Dorsolateral prefrontal cortex (tissue), 120 donors: ENCODE measurements at regions of chr17 and their contacts with region 1.

Region 1: DNA sequence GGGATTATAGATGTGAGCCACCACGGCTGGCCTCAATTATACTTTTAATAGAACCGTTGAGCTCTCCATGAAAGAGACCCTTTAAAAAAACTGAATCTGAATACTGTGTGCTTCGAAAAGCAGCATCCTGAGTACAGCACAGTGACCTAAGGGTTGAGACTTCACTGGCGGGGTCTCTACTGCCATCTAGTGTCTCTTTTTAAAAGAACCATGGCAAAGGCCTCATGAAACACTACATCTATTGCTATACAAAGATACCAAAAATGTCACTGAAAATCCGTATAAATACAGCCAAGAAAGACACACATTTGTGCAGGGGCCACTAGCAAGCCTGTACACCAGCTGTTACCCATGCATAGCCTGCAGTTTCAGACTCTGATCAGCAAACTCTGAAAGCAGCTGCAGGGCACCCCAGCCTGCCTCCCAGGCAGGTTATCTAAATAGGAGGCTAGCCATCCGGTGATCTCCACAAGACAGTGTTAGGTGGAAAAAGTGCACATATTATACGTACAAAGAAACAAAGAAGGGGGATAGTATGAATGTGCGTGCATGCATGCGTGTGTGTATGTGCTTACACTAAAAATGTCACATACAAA is 35.3 kb downstream of the NPLOC4 start:
- DNase-seq: peak in 2 of 10 donors; percentile 41 to 54
- H3K4me3 ChIP-seq: no peak overlapping the region
- H3K27ac ChIP-seq: peak overlapping the region in 21 of 59 donors; percentile 2 to 69 (median 23)
- H3K27me3 ChIP-seq: no peaks in the 10 kb centered on the region
- CTCF ChIP-seq: peak; percentile 61 to 90 (median 77)

Region 2: GRCh38 chr17:81253358-81254131 is 348.1 kb before region 1 on chr17:
- intact Hi-C with region 1: loop called (anchors 2 to 5 kb)
- DNase-seq: peak in 7 of 10 donors; percentile 34 to 71 (median 61)
- H3K4me3 ChIP-seq: no peak overlapping the region
- H3K27ac ChIP-seq: peak overlapping the region in 6 of 59 donors; percentile 4 to 81 (median 38)
- H3K27me3 ChIP-seq: no peaks in the 10 kb centered on the region
- CTCF ChIP-seq: peak; percentile 68 to 92 (median 84)